ENCODE measurements at regions of chr1 and their contacts with region 1.

Region 1: GRCh38 chr1:39886757-39887231 is 3.5 kb upstream of the TRIT1 start:
- DNase-seq: no peak
- ATAC-seq: no peak
- H3K4me3 ChIP-seq: no peak overlapping the region
- H3K4me3 Mint-ChIP-seq: no peak overlapping the region
- H3K27ac ChIP-seq: no peak overlapping the region
- H3K27ac Mint-ChIP-seq: no peak overlapping the region
- H3K4me1 ChIP-seq: peaks cover 16% of the 10 kb centered on the region
- H3K4me1 Mint-ChIP-seq: peaks cover 18% of the 10 kb centered on the region
- H3K27me3 ChIP-seq: peaks cover 2 to 4% of the 10 kb centered on the region in 2 experiments
- H3K27me3 Mint-ChIP-seq: peaks cover 9% of the 10 kb centered on the region
- CTCF ChIP-seq: no peak

Region 2: DNA sequence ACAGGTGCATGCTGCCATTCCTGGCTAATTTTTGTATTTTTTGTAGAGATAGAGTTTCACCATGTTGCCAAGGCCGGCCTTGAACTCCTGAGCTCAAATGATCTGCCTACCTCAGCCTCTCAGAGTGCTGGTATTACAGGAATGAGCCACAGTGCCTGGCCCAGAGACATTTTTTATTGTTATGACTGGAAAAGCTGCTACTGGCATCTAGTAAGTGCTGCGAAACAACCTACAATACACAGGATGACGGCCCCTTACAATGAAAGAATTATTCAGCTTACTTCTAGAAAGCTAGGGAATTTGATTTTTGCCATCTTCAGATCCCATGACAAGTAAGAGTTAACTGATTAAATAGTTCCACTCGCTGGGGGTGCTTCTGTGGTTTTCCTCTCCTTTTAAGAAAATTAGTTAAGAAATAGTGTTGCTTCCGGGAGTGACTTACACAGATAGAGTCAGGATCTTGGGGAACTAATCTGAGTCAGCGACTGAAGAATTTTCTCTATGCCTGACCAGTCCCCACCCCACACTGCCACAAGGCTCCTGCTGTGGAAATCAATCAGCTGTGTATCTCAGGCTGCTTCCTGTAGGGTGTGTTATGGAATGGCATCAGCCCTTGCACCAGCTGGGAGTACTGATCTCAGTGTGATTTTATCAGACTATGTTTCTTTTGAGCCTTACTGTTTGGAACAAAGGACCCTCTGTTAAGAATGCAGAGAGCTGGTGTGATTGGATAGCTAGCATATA is 488.3 kb before region 1 on chr1:
- CTCF ChIA-PET with region 1: no interaction called
- POLR2A ChIA-PET with region 1: no interaction called
- intact Hi-C with region 1: no loop called
- DNase-seq: peak in 6 of 14 experiments; percentile 12 to 60 (median 44)
- ATAC-seq: peak; percentile 54
- H3K4me3 ChIP-seq: no peak overlapping the region
- H3K4me3 Mint-ChIP-seq: peak overlapping the region; percentile 61
- H3K27ac ChIP-seq: no peak overlapping the region
- H3K27ac Mint-ChIP-seq: peak overlapping the region; percentile 74
- H3K4me1 ChIP-seq: peaks cover 38% of the 10 kb centered on the region
- H3K4me1 Mint-ChIP-seq: peaks cover 63% of the 10 kb centered on the region
- H3K27me3 ChIP-seq: no peaks in the 10 kb centered on the region
- H3K27me3 Mint-ChIP-seq: no peaks in the 10 kb centered on the region
- CTCF ChIP-seq: no peak

Region 3: GRCh38 chr1:39789571-39790110 is 97.2 kb before region 1 on chr1:
- CTCF ChIA-PET with region 1: no interaction called
- POLR2A ChIA-PET with region 1: no interaction called
- intact Hi-C with region 1: no loop called
- DNase-seq: no peak
- ATAC-seq: no peak
- H3K4me3 ChIP-seq: peak overlapping the region; percentile 47
- H3K4me3 Mint-ChIP-seq: peak overlapping the region; percentile 76
- H3K27ac ChIP-seq: no peak overlapping the region
- H3K27ac Mint-ChIP-seq: no peak overlapping the region
- H3K4me1 ChIP-seq: peaks cover 15% of the 10 kb centered on the region
- H3K4me1 Mint-ChIP-seq: peaks cover 5% of the 10 kb centered on the region
- H3K27me3 ChIP-seq: peaks cover 6% of the 10 kb centered on the region in 2 experiments
- H3K27me3 Mint-ChIP-seq: peaks cover 45% of the 10 kb centered on the region
- CTCF ChIP-seq: no peak

Region 4: GRCh38 chr1:39845275-39846116 is 41.3 kb before region 1 on chr1:
- CTCF ChIA-PET with region 1: no interaction called
- POLR2A ChIA-PET with region 1: no interaction called
- intact Hi-C with region 1: loop called in 1 of 2 experiments (anchors 5 kb)
- DNase-seq: peak; percentile 51 to 96 (median 72)
- ATAC-seq: peak; percentile 99
- H3K4me3 ChIP-seq: no peak overlapping the region
- H3K4me3 Mint-ChIP-seq: peak overlapping the region; percentile 68
- H3K27ac ChIP-seq: peak overlapping the region; percentile 62 to 74
- H3K27ac Mint-ChIP-seq: peak overlapping the region; percentile 89
- H3K4me1 ChIP-seq: peaks cover 46% of the 10 kb centered on the region
- H3K4me1 Mint-ChIP-seq: peaks cover 53% of the 10 kb centered on the region
- H3K27me3 ChIP-seq: no peaks in the 10 kb centered on the region
- H3K27me3 Mint-ChIP-seq: no peaks in the 10 kb centered on the region
- CTCF ChIP-seq: no peak